ENCODE measurements at regions of chr19 and their contacts with region 1.

Region 1: DNA sequence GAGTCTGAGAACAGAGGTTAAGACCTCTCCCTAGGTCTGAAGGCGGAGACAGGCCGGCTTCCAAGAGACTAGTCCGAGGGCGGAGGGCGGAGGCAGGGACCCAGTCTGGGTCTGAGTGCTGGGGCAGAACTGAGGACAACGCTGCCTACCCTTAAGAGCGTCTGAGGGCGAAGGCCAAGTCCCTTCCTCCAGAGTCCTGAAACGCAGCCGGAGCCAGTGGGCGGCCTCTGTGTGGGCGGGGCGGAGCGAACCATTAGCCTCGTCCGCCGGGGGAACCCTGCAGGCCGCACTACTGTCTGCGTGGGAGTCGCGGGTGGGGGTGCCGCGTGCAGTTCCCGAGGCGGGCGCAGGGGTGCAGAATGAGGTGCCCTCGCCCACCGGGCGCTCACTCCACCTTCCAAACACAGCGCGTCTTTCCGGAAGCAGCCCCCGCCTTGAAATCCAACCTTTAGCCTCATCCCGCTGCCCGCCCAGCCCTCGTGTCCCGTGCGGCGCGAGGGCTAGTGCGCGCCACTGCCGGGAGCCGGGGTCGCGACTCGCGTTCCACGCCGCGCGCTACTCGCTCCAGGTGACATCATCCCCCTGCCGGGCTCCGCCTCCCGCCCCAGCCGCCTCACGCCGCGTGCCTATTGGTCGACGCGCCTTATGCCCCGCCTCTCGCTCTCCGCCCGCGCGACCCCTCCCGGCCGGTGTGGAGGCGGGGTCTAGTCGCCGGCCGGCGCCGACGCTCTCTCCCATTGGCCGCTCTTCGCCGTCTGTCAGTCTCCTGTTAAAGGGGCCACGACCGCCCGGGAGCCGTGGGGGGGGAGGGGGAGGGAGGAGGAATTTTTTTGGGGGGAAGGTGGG is at the start of gene C19orf73:
- DNase-seq: peak; percentile 94
- H3K4me3 ChIP-seq: peak within 1 kb of the TSS; percentile 16 to 65 (median 57)
- H3K27ac ChIP-seq: peak within 1 kb of the TSS; percentile 63
- H3K4me1 ChIP-seq: peaks cover 14% of the 10 kb centered on the region
- H3K27me3 ChIP-seq: peaks cover 4 to 8% of the 10 kb centered on the region in 2 experiments
- CTCF ChIP-seq: peak in 1 of 2 donors; percentile 7
- POLR2A ChIP-seq: peak; percentile 53
- total RNA-seq, gene C19orf73: 1.5 TPM in 1 of 2 replicates, not detected in the other

Region 2: GRCh38 chr19:48588670-48589399 is 530.0 kb before region 1 on chr19:
- CTCF ChIA-PET with region 1: no interaction called
- POLR2A ChIA-PET with region 1: no interaction called
- dilution Hi-C with region 1: no loop called
- intact Hi-C with region 1: no loop called
- DNase-seq: peak; percentile 74
- H3K4me3 ChIP-seq: peak overlapping the region in 1 of 3 experiments; percentile 3
- H3K27ac ChIP-seq: no peak overlapping the region
- H3K4me1 ChIP-seq: no peaks in the 10 kb centered on the region
- H3K27me3 ChIP-seq: no peaks in the 10 kb centered on the region
- CTCF ChIP-seq: peak; percentile 97 to 98
- POLR2A ChIP-seq: no peak

Region 3: GRCh38 chr19:49014123-49014869 is 104.5 kb before region 1 on chr19:
- CTCF ChIA-PET with region 1: no interaction called
- POLR2A ChIA-PET with region 1: no interaction called
- dilution Hi-C with region 1: no loop called
- intact Hi-C with region 1: no loop called
- DNase-seq: no peak
- H3K4me3 ChIP-seq: no peak overlapping the region
- H3K27ac ChIP-seq: no peak overlapping the region
- H3K4me1 ChIP-seq: peaks cover 10% of the 10 kb centered on the region
- H3K27me3 ChIP-seq: no peaks in the 10 kb centered on the region
- CTCF ChIP-seq: no peak
- POLR2A ChIP-seq: no peak

Region 4: GRCh38 chr19:49106648-49107135 is 12.1 kb before region 1 on chr19:
- CTCF ChIA-PET with region 1: interaction called, 20 read pairs
- POLR2A ChIA-PET with region 1: no interaction called
- dilution Hi-C with region 1: no loop called
- intact Hi-C with region 1: no loop called
- DNase-seq: peak; percentile 45
- H3K4me3 ChIP-seq: no peak overlapping the region
- H3K27ac ChIP-seq: no peak overlapping the region
- H3K4me1 ChIP-seq: no peaks in the 10 kb centered on the region
- H3K27me3 ChIP-seq: no peaks in the 10 kb centered on the region
- CTCF ChIP-seq: peak; percentile 82 to 84
- POLR2A ChIP-seq: no peak

Region 5: DNA sequence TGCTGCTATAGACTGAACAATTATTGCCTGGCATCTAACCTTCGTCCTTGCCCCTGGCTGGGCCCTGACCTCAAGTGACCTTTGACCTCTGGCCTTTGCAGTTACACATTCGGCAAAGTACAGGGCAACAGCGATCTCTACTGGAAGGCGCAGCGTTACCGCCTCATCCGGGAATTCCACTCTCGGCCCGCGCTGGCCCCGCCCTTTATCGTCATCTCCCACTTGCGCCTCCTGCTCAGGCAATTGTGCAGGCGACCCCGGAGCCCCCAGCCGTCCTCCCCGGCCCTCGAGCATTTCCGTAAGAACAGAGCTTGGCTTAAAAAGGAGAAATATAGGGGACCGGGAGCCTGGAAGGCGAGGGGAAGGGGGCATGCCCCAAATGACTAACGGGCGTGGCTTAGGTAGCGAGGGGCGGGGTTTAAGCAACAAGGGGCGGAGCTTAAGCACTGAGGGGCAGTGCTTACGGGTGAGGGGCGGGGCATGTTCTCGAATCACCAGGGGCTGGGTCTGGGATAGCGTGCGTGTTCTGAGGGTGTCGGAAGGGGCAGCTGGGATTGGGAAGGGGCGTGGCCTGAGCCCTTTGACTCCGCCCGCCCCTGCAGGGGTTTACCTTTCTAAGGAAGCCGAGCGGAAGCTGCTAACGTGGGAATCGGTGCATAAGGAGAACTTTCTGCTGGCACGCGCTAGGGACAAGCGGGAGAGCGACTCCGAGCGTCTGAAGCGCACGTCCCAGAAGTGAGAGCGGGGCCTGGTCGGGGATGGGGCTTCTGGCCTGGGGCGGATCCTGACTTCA is 91.5 kb after region 1 on chr19:
- CTCF ChIA-PET with region 1: interaction called, 20 read pairs
- POLR2A ChIA-PET with region 1: no interaction called
- dilution Hi-C with region 1: no loop called
- intact Hi-C with region 1: no loop called
- DNase-seq: peak; percentile 9
- H3K4me3 ChIP-seq: no peak overlapping the region
- H3K27ac ChIP-seq: no peak overlapping the region
- H3K4me1 ChIP-seq: no peaks in the 10 kb centered on the region
- H3K27me3 ChIP-seq: no peaks in the 10 kb centered on the region
- CTCF ChIP-seq: no peak
- POLR2A ChIP-seq: no peak

Measured in endothelial cell of umbilical vein (primary cell).